ENCODE measurements at regions of chr1 and their contacts with region 1.

Region 1: DNA sequence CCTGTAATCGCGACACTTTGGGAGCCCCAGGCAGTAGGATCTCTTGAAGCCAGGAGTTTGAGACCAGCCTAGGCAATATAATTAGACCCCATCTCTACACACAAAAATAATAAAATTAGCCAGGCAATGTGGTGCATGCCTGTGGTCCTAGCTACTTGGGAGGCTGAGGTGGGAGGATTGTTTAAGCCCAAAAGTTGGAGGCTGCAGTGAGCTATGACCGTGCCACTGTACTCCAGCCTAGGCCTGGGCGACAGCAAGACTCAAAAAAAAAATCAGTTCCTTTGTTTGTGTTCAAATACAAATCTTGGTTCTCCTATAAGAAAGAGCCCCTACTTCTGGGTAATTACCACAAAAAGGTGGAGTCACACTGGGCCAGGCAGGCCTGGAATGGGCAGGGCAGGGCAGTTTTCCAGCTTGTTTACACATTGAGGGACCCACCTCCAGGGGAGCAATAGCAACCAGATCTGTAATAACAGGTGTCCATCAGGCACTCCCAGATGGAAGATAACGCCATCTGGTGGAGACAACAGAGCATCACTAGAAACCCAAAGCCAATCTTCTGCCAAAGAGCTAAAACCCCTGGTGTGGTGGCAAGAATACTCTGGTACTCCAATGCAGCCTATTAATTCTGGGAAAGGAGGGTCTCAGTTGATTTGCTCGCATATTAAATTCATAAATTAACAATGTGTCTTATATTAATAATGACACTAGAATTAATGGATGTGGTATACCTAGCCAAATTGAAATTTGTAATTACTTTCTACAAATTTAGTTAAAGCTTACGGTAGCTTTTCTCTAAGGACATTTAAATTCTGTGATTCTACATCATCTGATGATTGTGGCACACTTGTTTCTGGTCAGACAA is 13.2 kb downstream of the PPP1R15B start:
- DNase-seq: peak; percentile 82
- H3K4me3 ChIP-seq: no peak overlapping the region
- H3K27ac ChIP-seq: no peak overlapping the region
- H3K4me1 ChIP-seq: no peaks in the 10 kb centered on the region
- H3K27me3 ChIP-seq: no peaks in the 10 kb centered on the region
- CTCF ChIP-seq: peak; percentile 85
- EP300 ChIP-seq: no peak
- RAD21 ChIP-seq: peak; percentile 79

Region 2: DNA sequence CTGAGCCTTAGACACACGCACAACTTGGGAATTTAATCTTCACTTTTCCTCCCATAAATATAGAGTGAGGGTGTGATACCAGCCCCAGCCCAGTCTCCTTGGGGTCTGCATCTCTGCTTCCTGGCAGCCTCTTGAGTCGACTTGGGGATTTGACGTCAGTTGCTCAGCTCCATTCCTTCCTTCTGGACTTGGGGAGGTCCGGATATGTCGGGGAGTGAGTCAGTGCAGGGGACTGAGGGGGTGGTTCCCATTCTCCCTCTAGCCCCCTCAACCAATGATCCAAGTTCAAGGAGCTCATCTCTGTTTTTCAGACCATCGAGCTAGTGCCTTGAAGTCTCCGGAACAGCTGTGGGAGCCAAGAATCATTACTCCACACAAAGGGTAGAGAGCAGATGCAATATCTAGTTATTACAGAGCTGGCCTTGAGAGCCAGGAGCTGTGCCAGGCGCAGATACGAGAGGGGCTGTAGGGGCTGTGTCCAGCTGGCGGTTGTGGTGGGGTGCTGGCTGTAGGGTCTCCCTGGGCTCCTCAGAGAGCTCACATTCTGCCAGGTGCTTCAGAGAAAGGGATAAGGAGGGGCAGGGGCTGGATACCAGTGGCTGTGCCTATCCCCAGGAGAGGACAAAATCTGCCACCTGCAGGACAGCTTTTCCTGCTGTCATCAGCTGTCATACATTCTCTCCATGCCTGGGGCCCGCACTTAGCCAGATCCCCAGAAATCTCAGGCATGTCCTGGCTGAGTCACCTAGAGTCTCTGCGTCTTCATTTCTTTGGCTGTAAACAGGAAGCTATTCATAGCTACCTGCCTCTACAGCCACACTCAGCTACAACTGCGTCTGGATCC is 200.1 kb before region 1 on chr1:
- CTCF ChIA-PET with region 1: interaction called, 11 read pairs
- POLR2A ChIA-PET with region 1: no interaction called
- DNase-seq: peak; percentile 45
- H3K4me3 ChIP-seq: no peak overlapping the region
- H3K27ac ChIP-seq: no peak overlapping the region
- H3K4me1 ChIP-seq: peaks cover 2 to 26% of the 10 kb centered on the region in 2 experiments; a peak in 2 of 4 replicates
- H3K27me3 ChIP-seq: no peaks in the 10 kb centered on the region
- CTCF ChIP-seq: no peak; the same call in 1 of the 2 replicates
- EP300 ChIP-seq: 0 out of 4 replicates have a peak, but pooled peaks of 1 of the 2 experiments have one; percentile 37
- RAD21 ChIP-seq: no peak

Region 3: DNA sequence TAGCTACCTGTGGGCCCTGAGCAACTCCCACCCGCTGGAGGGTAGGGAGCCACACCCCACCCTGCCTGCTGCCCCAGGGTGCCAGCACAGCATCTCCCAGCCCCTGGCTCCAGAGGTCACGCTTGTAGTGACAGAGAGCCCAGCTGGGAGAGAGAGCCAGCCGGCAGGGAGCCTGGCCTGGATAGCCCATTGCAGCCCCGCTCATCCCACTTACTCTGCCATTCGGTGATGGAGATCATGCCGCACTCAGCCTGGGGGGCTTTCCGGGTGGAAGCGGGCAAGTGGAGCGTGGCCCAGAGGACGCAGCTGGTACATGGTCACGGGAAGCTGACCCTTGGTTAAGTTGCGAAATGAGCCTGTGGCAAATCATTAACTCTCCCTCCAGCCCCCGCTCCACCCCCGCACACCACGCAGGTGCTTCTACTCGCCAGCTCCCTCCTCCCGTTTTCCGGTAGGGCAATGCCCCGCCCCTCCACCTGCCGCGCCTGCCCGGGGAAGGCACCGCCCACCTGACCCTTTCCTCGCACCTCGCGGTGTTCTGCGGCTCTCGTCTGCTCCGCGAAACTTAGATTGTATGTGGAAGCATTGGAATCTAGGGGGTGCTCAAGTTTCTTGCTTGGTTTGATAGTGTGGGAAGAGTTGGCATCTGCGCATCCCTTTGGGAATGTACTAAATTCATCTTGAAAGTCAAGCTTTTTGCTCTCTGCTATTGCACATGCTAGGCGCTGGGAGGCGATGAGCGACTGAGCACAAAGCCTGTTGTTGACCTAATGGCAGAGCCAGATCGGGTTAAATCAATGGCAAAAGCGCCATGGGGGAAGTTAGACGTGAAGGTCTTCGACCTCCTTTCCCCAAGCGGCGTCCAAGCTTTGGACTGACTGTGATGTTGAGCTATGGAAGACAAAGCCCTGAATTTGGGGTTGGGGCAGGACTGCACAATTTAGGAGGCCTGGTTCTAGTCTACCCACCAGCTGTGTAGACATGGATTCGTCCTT is 184.5 kb before region 1 on chr1 and contains the start of gene GOLT1A:
- CTCF ChIA-PET with region 1: interaction called, 28 read pairs
- POLR2A ChIA-PET with region 1: no interaction called
- DNase-seq: peak; percentile 65
- H3K4me3 ChIP-seq: peak within 1 kb of the TSS in 1 of 2 experiments; percentile 27; a peak in 1 of 4 replicates
- H3K27ac ChIP-seq: no peak within 1 kb of the TSS
- H3K4me1 ChIP-seq: no peaks in the 10 kb centered on the region; a peak in 1 of 4 replicates
- H3K27me3 ChIP-seq: peaks cover 18% of the 10 kb centered on the region; the same call in 1 of the 2 replicates
- CTCF ChIP-seq: peak; percentile 60
- EP300 ChIP-seq: no peak
- RAD21 ChIP-seq: peak; percentile 67
- polyA plus RNA-seq, gene GOLT1A: not detected in 2 replicates

Region 4: GRCh38 chr1:204286831-204287421 is 111.5 kb before region 1 on chr1:
- CTCF ChIA-PET with region 1: interaction called, 17 read pairs
- POLR2A ChIA-PET with region 1: interaction called, 3 read pairs
- DNase-seq: peak; percentile 51
- H3K4me3 ChIP-seq: peak overlapping the region in 1 of 2 experiments; percentile 54; a peak in 2 of 4 replicates
- H3K27ac ChIP-seq: peak overlapping the region in 1 of 2 experiments; percentile 98; a peak in 2 of 4 replicates
- H3K4me1 ChIP-seq: peaks cover 0 to 54% of the 10 kb centered on the region in 2 experiments; a peak in 2 of 4 replicates
- H3K27me3 ChIP-seq: peaks cover 21% of the 10 kb centered on the region
- CTCF ChIP-seq: no peak
- EP300 ChIP-seq: peak in 1 of 2 experiments; percentile 56; a peak in 1 of 4 replicates
- RAD21 ChIP-seq: no peak

Region 5: GRCh38 chr1:204384994-204385352 is 13.5 kb before region 1 on chr1:
- CTCF ChIA-PET with region 1: interaction called, 104 read pairs
- POLR2A ChIA-PET with region 1: interaction called, 3 read pairs
- DNase-seq: peak; percentile 48
- H3K4me3 ChIP-seq: no peak overlapping the region
- H3K27ac ChIP-seq: no peak overlapping the region; a peak in 1 of 4 replicates
- H3K4me1 ChIP-seq: peaks cover 3 to 9% of the 10 kb centered on the region in 2 experiments; a peak in 1 of 4 replicates
- H3K27me3 ChIP-seq: peaks cover 2% of the 10 kb centered on the region
- CTCF ChIP-seq: no peak
- EP300 ChIP-seq: no peak
- RAD21 ChIP-seq: no peak

Region 6: GRCh38 chr1:204494281-204495077 is 96.0 kb after region 1 on chr1 and contains the start of gene PIK3C2B:
- CTCF ChIA-PET with region 1: interaction called, 14 read pairs
- POLR2A ChIA-PET with region 1: interaction called, 3 read pairs
- DNase-seq: peak; percentile 97
- H3K4me3 ChIP-seq: peak within 1 kb of the TSS; percentile 72 to 79
- H3K27ac ChIP-seq: peak within 1 kb of the TSS; percentile 70 to 90
- H3K4me1 ChIP-seq: peaks cover 0 to 15% of the 10 kb centered on the region in 2 experiments; a peak in 3 of 4 replicates
- H3K27me3 ChIP-seq: no peaks in the 10 kb centered on the region
- CTCF ChIP-seq: peak; percentile 43
- EP300 ChIP-seq: no peak
- RAD21 ChIP-seq: peak; percentile 26
- polyA plus RNA-seq, gene PIK3C2B: 6.5 and 6.6 TPM in 2 replicates